Panc1 (cell line): ENCODE measurements at regions of chr16 and their contacts with region 1.

Region 1: GRCh38 chr16:24689145-24689544 is 40.3 kb upstream of the TNRC6A start:
- DNase-seq: no peak
- ATAC-seq: peak; percentile 80
- H3K4me3 ChIP-seq: no peak overlapping the region
- H3K27ac ChIP-seq: peak overlapping the region; percentile 19; the same call in 1 of the 2 replicates
- H3K4me1 ChIP-seq: peaks cover 8% of the 10 kb centered on the region
- H3K27me3 ChIP-seq: no peaks in the 10 kb centered on the region
- CTCF ChIP-seq: peak; percentile 88

Region 2: DNA sequence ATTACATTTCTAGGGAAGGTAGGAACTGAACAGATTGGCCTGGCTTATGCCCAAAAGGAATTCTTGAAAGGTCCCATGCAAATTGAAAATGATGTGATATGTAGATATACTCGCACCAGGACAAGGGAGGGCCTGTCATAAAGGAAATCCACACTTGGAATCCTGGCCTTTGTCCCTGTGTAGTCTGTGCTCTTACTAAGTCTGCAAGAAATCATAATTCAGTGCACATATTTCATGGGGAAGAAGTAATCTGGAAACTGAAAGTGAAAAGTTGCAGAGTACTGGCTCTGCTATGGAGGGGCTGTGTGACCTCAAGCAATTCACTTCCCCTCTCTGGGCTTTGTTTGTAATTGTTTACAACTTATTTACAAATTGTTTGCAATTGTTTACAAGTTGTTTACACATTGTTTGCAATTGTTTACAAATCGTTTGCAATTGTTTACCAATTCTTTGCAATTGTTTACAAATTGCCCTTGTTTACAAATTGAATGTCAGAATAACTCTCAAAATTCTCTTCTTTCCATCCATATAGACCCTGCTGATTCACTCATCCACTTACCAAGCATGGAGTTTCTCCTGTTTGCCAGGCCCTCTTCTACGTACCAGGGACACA is 1493.7 kb before region 1 on chr16:
- CTCF ChIA-PET with region 1: no interaction called
- POLR2A ChIA-PET with region 1: no interaction called
- in situ Hi-C with region 1: no loop called
- intact Hi-C with region 1: no loop called
- DNase-seq: no peak
- ATAC-seq: no peak
- H3K4me3 ChIP-seq: no peak overlapping the region
- H3K27ac ChIP-seq: no peak overlapping the region; the same call in 1 of the 2 replicates
- H3K4me1 ChIP-seq: no peaks in the 10 kb centered on the region
- H3K27me3 ChIP-seq: no peaks in the 10 kb centered on the region
- CTCF ChIP-seq: no peak

Region 3: GRCh38 chr16:24516900-24517669 is 172.1 kb before region 1 on chr16:
- CTCF ChIA-PET with region 1: no interaction called
- POLR2A ChIA-PET with region 1: no interaction called
- in situ Hi-C with region 1: no loop called
- intact Hi-C with region 1: loop called (anchors 5 kb)
- DNase-seq: peak; percentile 87
- ATAC-seq: peak; percentile 95
- H3K4me3 ChIP-seq: peak overlapping the region; percentile 24 to 47; a peak in 3 of 4 replicates
- H3K27ac ChIP-seq: no peak overlapping the region
- H3K4me1 ChIP-seq: no peaks in the 10 kb centered on the region
- H3K27me3 ChIP-seq: no peaks in the 10 kb centered on the region
- CTCF ChIP-seq: peak; percentile 95

Region 4: DNA sequence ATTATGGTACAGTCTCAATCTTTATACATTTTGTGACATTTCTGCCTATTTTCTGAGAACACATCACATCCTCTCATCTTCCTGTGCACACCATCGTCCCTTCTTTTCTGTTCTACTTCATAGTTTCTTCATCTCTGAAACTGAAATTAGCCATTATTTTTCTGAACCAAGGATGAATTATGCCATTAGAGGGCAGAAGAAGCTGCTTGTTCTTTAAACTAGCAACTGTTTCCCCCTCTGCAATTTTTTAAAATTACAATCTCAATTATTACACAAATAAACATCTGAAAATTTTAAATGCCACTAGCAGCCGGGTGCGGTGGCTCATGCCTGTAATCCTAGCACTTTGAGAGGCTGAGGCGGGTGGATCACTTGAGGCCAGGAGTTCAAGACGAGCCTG is 108.5 kb before region 1 on chr16:
- CTCF ChIA-PET with region 1: no interaction called
- POLR2A ChIA-PET with region 1: no interaction called
- in situ Hi-C with region 1: no loop called
- intact Hi-C with region 1: loop called (anchors 5 kb)
- DNase-seq: peak; percentile 15
- ATAC-seq: peak; percentile 37; the same call in 1 of the 2 replicates
- H3K4me3 ChIP-seq: no peak overlapping the region
- H3K27ac ChIP-seq: no peak overlapping the region
- H3K4me1 ChIP-seq: no peaks in the 10 kb centered on the region
- H3K27me3 ChIP-seq: no peaks in the 10 kb centered on the region
- CTCF ChIP-seq: no peak; the same call in 1 of the 2 replicates

Region 5: GRCh38 chr16:24717411-24717810 is 28.3 kb after region 1 on chr16:
- CTCF ChIA-PET with region 1: no interaction called
- POLR2A ChIA-PET with region 1: interaction called, 12 read pairs
- in situ Hi-C with region 1: no loop called
- intact Hi-C with region 1: no loop called
- DNase-seq: no peak
- ATAC-seq: no peak
- H3K4me3 ChIP-seq: no peak overlapping the region
- H3K27ac ChIP-seq: no peak overlapping the region
- H3K4me1 ChIP-seq: 0 out of 2 replicates have a peak, but pooled peaks cover 3% of the 10 kb centered on the region
- H3K27me3 ChIP-seq: no peaks in the 10 kb centered on the region
- CTCF ChIP-seq: no peak